Activated CD4-positive, alpha-beta T cell treated with anti-CD3 and anti-CD28 coated beads for 36 hours (primary cell): ENCODE measurements at regions of chr9 and their contacts with region 1.

Region 1: GRCh38 chr9:18699749-18700148 is 225.8 kb downstream of the ADAMTSL1 start:
- DNase-seq: no peak
- ATAC-seq: no peak
- H3K4me3 Mint-ChIP-seq: no peak overlapping the region
- H3K27ac Mint-ChIP-seq: no peak overlapping the region
- H3K4me1 Mint-ChIP-seq: no peaks in the 10 kb centered on the region
- H3K27me3 Mint-ChIP-seq: peaks cover 4% of the 10 kb centered on the region

Region 2: GRCh38 chr9:18747595-18747994 is 47.8 kb after region 1 on chr9:
- CTCF ChIA-PET with region 1: no interaction called
- POLR2A ChIA-PET with region 1: no interaction called
- intact Hi-C with region 1: loop called in 1 of 2 experiments (anchors 5 kb)
- DNase-seq: no peak
- ATAC-seq: no peak
- H3K4me3 Mint-ChIP-seq: no peak overlapping the region
- H3K27ac Mint-ChIP-seq: no peak overlapping the region
- H3K4me1 Mint-ChIP-seq: no peaks in the 10 kb centered on the region
- H3K27me3 Mint-ChIP-seq: no peaks in the 10 kb centered on the region